K562 (cell line): ENCODE measurements at regions of chr11 and their contacts with region 1.

Region 1: DNA sequence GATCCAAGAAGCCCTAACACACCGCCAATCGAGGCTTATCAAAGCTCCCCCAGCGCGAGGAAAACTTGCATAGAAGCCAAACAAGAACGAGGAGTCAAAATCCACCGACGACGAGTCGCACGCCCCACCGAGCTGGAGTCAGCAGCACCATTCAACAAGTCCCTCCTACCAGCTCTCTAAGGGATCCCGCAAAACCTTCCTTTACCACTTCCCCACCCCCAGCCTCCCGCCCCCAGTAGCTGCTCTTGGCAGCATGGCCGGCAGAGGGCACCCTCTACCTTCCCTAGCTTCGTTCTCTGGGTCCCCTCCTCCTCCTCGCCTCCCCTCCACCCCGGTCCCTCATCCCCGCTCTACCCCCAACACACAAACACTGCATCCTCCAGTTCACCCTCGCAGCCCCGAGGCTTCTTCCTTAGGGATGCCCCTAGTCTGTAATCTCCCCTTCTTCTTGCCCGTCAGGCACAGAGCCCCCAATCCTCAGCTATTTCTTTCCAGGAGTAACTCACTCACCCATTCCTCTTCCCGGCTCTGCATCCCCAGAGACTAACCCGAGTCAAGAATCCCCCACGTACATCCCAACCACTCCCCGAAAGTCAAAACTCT is 1.3 kb downstream of the BDNF start:
- DNase-seq: peak; percentile 76 to 83 (median 79)
- ATAC-seq: peak; percentile 98
- H3K4me3 ChIP-seq: no peak overlapping the region
- H3K27ac ChIP-seq: no peak overlapping the region
- H3K4me1 ChIP-seq: peaks cover 0 to 4% of the 10 kb centered on the region in 2 experiments; a peak in 2 of 5 replicates
- H3K27me3 ChIP-seq: peaks cover 0 to 5% of the 10 kb centered on the region in 2 experiments; a peak in 1 of 5 replicates
- CTCF ChIP-seq: peak; percentile 48 to 73 (median 67); a peak in 5 of 6 replicates
- EP300 ChIP-seq: no peak
- POLR2A ChIP-seq: no peak
- RAD21 ChIP-seq: peak; percentile 43 to 56

Region 2: DNA sequence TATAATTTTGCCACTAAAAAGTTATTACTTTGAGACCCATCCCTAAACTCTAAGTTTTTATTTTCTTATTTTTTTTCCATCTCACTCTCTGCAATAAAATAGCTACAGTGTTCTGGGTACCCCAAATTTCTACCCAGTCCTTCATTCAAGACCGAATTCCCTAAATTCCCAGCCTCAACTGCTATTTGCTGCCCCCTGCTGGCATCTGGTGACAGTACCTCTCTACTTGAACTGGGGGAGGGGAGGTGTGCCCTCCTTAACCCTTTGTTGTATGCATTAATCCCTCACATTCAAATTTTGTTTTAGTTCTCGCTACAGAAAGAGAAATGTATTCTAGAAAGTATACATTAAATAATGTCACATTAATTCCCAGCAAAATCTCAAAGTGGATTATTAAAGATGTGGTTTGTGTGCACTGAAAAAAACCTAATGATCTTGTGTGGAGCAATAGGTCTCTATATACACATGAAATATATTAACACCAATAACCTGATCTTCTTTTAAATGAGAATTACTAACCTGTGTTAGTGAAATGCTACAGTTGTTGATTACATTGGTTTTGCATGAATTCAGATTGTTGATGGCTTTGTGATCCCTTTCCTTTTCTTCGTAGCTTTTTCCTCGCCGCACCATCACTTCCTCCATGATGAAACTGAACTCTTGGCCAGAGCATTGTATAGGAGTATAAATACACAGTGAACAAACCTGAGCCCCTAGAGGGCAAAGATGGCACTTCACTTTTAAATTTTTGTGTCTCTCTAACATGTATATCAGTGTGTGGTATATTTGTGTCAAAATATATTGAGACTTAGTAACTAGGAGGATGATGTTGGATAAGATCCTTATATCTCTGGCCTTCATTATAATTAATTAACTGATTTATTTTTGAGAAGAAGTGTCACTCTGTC is 999.2 kb after region 1 on chr11:
- CTCF ChIA-PET with region 1: interaction called, 4 read pairs
- POLR2A ChIA-PET with region 1: no interaction called
- in situ Hi-C with region 1: no loop called
- intact Hi-C with region 1: loop called (anchors 5 kb)
- DNase-seq: peak; percentile 40 to 75 (median 60)
- ATAC-seq: peak; percentile 72
- H3K4me3 ChIP-seq: no peak overlapping the region
- H3K27ac ChIP-seq: no peak overlapping the region
- H3K4me1 ChIP-seq: no peaks in the 10 kb centered on the region
- H3K27me3 ChIP-seq: no peaks in the 10 kb centered on the region
- CTCF ChIP-seq: peak; percentile 54 to 64 (median 60)
- EP300 ChIP-seq: no peak
- POLR2A ChIP-seq: no peak
- RAD21 ChIP-seq: peak; percentile 46 to 63

Region 3: GRCh38 chr11:29159552-29160465 is 1460.8 kb after region 1 on chr11:
- CTCF ChIA-PET with region 1: no interaction called
- POLR2A ChIA-PET with region 1: no interaction called
- in situ Hi-C with region 1: no loop called
- intact Hi-C with region 1: loop called (anchors 5 kb)
- DNase-seq: peak; percentile 6 to 12 (median 9)
- ATAC-seq: 0 out of 3 replicates have a peak, but pooled peaks have one; percentile 33
- H3K4me3 ChIP-seq: no peak overlapping the region
- H3K27ac ChIP-seq: no peak overlapping the region
- H3K4me1 ChIP-seq: no peaks in the 10 kb centered on the region
- H3K27me3 ChIP-seq: no peaks in the 10 kb centered on the region
- CTCF ChIP-seq: peak in 2 of 3 experiments; percentile 22 to 33; a peak in 1 of 6 replicates
- EP300 ChIP-seq: no peak
- POLR2A ChIP-seq: no peak
- RAD21 ChIP-seq: peak in 1 of 2 experiments; percentile 33; a peak in 2 of 4 replicates

Region 4: DNA sequence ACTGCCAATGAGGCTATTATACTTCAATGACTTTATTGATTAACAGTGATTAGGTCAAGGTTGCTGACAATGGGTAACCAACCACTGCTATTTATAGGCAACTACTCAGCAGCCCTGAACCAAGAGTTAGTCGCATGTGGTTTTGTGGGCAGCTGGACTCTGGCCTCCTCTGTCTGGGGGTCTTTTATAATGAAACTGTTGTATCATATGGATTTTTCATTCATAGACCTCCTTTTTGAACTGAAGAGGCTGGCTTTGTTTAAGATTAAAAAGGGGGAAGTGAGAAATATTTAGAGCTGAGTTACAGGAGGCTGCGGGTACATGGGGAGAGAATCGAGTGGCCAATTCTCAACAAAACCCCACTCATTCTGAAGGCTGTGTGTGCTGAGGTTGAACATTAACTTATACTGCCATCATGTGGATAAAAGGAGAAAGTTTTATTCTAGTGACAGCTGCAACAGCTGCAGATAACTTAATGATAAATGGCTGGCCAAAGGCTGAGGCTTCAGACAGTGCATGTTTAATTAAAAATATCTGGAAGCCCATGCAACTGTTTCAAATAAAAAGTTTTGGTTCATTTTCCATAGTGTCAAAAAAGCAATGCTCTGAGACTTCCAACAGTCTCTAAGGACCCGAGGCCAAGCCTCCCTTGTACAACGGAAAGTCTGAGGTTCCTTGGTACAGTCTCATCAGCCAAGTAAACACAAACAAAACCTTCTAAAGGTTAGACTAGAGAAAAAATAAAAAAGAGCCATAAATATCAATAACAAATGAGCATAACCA is 1635.2 kb after region 1 on chr11:
- CTCF ChIA-PET with region 1: no interaction called
- POLR2A ChIA-PET with region 1: no interaction called
- in situ Hi-C with region 1: no loop called
- intact Hi-C with region 1: loop called (anchors 5 kb)
- DNase-seq: peak in 1 of 4 experiments; percentile 1
- ATAC-seq: no peak
- H3K4me3 ChIP-seq: no peak overlapping the region
- H3K27ac ChIP-seq: no peak overlapping the region
- H3K4me1 ChIP-seq: no peaks in the 10 kb centered on the region
- H3K27me3 ChIP-seq: no peaks in the 10 kb centered on the region
- CTCF ChIP-seq: peak in 2 of 3 experiments; percentile 18 to 26; a peak in 2 of 6 replicates
- EP300 ChIP-seq: no peak
- POLR2A ChIP-seq: no peak
- RAD21 ChIP-seq: peak; percentile 12 to 40; a peak in 2 of 4 replicates